B cell (primary cell): ENCODE measurements at regions of chr21 and their contacts with region 1.

Region 1: GRCh38 chr21:39183237-39184007 is at the start of gene PSMG1:
- DNase-seq: peak; percentile 97
- ATAC-seq: peak; percentile 91
- H3K4me3 ChIP-seq: peak within 1 kb of the TSS; percentile 69 to 84 (median 78)
- H3K4me3 Mint-ChIP-seq: peak within 1 kb of the TSS; percentile 100
- H3K27ac ChIP-seq: peak within 1 kb of the TSS; percentile 83 to 90
- H3K27ac Mint-ChIP-seq: peak within 1 kb of the TSS; percentile 99
- H3K4me1 ChIP-seq: peaks cover 13 to 14% of the 10 kb centered on the region in 2 donors
- H3K4me1 Mint-ChIP-seq: peaks cover 32% of the 10 kb centered on the region
- H3K27me3 ChIP-seq: no peaks in the 10 kb centered on the region
- H3K27me3 Mint-ChIP-seq: no peaks in the 10 kb centered on the region
- CTCF ChIP-seq: no peak
- total RNA-seq, gene PSMG1: 10.4 and 15.2 TPM in 2 replicates

Region 2: GRCh38 chr21:38766987-38767722 is 416.3 kb before region 1 on chr21:
- CTCF ChIA-PET with region 1: no interaction called
- POLR2A ChIA-PET with region 1: interaction called, 4 read pairs
- intact Hi-C with region 1: loop called (anchors 2 kb)
- DNase-seq: peak; percentile 75
- ATAC-seq: peak; percentile 92
- H3K4me3 ChIP-seq: peak overlapping the region; percentile 17 to 73 (median 62)
- H3K4me3 Mint-ChIP-seq: peak overlapping the region; percentile 80
- H3K27ac ChIP-seq: peak overlapping the region; percentile 46 to 60
- H3K27ac Mint-ChIP-seq: peak overlapping the region; percentile 90
- H3K4me1 ChIP-seq: peaks cover 5 to 11% of the 10 kb centered on the region in 2 donors
- H3K4me1 Mint-ChIP-seq: peaks cover 28% of the 10 kb centered on the region
- H3K27me3 ChIP-seq: peaks cover 0 to 26% (median 0%) of the 10 kb centered on the region in 4 experiments
- H3K27me3 Mint-ChIP-seq: peaks cover 29% of the 10 kb centered on the region
- CTCF ChIP-seq: no peak

Region 3: DNA sequence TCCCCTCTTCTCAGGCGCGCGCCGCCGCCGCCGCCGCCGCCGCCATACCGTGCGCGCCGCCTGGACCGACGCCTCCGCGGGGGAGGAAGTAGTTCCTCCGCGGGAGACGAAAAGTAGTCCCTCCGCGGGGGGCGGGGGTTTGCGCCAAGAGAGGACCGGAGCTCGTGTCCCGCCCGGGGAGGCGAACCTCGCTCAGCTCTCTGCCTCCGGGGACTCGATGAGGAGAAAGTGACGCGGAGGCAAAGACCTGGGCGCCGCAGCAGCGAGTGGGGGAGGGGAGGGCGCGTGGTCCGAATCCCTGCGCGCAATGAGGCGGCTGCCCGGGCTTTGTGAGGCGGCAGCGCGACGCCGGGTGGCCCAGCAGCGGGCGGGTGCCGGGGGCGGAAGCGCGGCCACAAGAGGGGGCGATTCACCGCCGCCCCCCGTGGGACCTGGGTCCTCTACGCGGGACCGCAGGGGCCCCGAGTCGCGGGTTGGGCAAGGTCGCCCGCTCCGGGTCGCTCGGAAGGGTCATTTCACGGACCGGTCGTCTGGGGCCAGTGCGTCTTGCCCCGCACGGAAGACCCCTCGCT is 130.2 kb after region 1 on chr21 and contains the start of gene BRWD1:
- CTCF ChIA-PET with region 1: interaction called, 3 read pairs
- POLR2A ChIA-PET with region 1: interaction called, 9 read pairs
- intact Hi-C with region 1: loop called (anchors 1 kb)
- DNase-seq: peak; percentile 97
- ATAC-seq: peak; percentile 52
- H3K4me3 ChIP-seq: peak within 1 kb of the TSS; percentile 50 to 83 (median 72)
- H3K4me3 Mint-ChIP-seq: peak within 1 kb of the TSS; percentile 95
- H3K27ac ChIP-seq: peak within 1 kb of the TSS; percentile 57 to 84
- H3K27ac Mint-ChIP-seq: peak within 1 kb of the TSS; percentile 90
- H3K4me1 ChIP-seq: peaks cover 11 to 29% of the 10 kb centered on the region in 2 donors
- H3K4me1 Mint-ChIP-seq: peaks cover 43% of the 10 kb centered on the region
- H3K27me3 ChIP-seq: no peaks in the 10 kb centered on the region
- H3K27me3 Mint-ChIP-seq: no peaks in the 10 kb centered on the region
- CTCF ChIP-seq: peak; percentile 55
- total RNA-seq, gene BRWD1: 90.8 and 93.9 TPM in 2 replicates

Region 4: DNA sequence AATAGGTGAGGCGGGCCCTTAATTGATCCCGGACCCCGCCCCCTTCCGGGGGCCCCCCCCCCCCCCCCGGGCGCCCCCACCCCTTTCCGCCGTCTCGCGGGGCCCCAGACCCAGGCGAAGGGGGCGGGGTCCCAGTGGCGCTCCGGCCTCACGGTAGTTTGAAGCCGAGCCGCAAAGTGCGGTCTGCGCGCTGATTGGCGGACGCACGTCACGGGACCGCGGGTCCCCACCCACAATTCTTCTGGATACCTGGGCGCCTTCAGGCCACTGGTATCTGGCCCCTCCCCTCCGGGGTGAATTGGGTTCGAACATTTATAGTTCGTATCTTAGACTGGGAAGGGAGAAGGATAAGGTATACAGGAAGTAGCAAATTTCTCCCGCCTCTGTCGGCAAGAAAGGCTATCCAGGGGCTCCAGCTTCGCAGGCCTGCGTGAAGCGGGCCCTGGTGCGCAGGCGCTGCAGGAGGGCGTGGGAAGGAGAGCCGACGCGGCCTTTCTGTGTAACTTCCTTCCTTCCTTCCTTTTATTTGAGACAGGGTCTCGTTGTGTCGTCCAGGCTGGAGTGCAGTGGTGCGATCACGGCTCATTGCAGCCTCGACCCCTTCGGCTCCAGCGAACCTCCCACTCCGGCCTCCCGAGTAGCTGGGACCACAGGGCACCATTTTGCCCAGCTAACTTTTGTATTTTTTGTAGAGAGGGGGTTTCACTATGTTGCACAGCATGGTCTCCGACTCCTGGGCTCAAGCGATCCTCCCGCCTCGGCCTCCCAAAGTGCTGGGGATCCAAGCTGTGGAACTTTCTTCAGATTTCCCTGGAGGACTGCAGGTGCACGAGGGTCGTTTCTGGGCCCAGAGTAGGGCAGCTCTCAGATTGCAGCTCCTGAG is 166.0 kb after region 1 on chr21:
- CTCF ChIA-PET with region 1: interaction called, 3 read pairs
- POLR2A ChIA-PET with region 1: interaction called, 19 read pairs
- intact Hi-C with region 1: loop called (anchors 1 kb)
- DNase-seq: peak; percentile 98
- ATAC-seq: peak; percentile 82
- H3K4me3 ChIP-seq: peak overlapping the region; percentile 42 to 89 (median 81)
- H3K4me3 Mint-ChIP-seq: peak overlapping the region; percentile 98
- H3K27ac ChIP-seq: peak overlapping the region; percentile 67 to 77
- H3K27ac Mint-ChIP-seq: peak overlapping the region; percentile 99
- H3K4me1 ChIP-seq: peaks cover 18 to 25% of the 10 kb centered on the region in 2 donors
- H3K4me1 Mint-ChIP-seq: peaks cover 31% of the 10 kb centered on the region
- H3K27me3 ChIP-seq: no peaks in the 10 kb centered on the region
- H3K27me3 Mint-ChIP-seq: peaks cover 7% of the 10 kb centered on the region
- CTCF ChIP-seq: no peak

Region 5: DNA sequence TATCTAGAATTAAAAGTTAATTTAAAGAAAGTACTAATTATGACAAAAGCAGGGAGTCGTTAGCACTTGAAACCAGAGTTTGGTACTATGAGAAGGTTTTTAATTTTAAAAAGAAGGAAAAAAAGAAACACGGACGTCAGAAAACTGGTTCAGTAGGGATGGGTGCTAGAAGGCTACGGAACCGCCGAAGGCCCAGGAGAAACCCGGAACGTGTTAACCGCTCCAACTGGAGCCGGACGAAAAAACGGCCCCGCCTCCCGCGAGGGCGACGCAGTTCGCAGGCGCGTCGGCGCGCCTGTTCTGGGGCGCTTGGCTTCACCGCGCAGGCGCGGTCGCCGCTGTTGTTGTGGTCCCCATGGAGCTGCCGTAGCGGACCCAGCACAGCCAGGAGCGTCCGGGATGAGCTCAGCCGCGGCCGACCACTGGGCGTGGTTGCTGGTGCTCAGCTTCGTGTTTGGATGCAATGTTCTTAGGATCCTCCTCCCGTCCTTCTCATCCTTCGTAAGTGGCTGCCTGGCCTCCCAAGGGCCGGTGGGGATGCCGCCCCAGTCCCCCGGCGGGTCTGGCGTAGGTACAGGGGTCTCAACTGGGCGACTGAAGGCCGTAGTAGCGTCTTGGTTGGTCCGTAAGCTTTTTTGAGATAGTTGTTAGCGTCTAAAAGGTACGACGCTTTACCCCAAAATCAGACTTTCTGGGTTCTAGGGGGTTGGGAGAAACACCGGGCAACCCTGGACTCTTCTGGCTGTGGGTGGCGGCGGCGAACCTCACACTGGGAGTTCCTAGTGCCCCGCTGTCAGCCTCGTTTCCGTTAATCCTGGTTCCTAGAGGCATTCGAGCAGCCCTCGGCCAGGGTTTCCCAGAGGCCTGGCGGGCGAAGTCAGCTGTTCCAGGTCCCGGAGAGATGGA is 196.8 kb after region 1 on chr21:
- CTCF ChIA-PET with region 1: no interaction called
- POLR2A ChIA-PET with region 1: interaction called, 4 read pairs
- intact Hi-C with region 1: loop called (anchors 2 kb)
- DNase-seq: peak; percentile 90
- ATAC-seq: peak; percentile 98
- H3K4me3 ChIP-seq: peak overlapping the region; percentile 73 to 97 (median 92)
- H3K4me3 Mint-ChIP-seq: peak overlapping the region; percentile 93
- H3K27ac ChIP-seq: peak overlapping the region; percentile 61 to 81
- H3K27ac Mint-ChIP-seq: peak overlapping the region; percentile 90
- H3K4me1 ChIP-seq: peaks cover 10 to 16% of the 10 kb centered on the region in 2 donors
- H3K4me1 Mint-ChIP-seq: peaks cover 19% of the 10 kb centered on the region
- H3K27me3 ChIP-seq: peaks cover 0 to 6% (median 0%) of the 10 kb centered on the region in 4 experiments
- H3K27me3 Mint-ChIP-seq: no peaks in the 10 kb centered on the region
- CTCF ChIP-seq: no peak

Region 6: GRCh38 chr21:39388038-39388810 is 204.8 kb after region 1 on chr21:
- CTCF ChIA-PET with region 1: interaction called, 7 read pairs
- POLR2A ChIA-PET with region 1: no interaction called
- intact Hi-C with region 1: loop called (anchors 1 kb)
- DNase-seq: peak; percentile 88
- ATAC-seq: peak; percentile 84
- H3K4me3 ChIP-seq: peak overlapping the region; percentile 38 to 63 (median 56)
- H3K4me3 Mint-ChIP-seq: peak overlapping the region; percentile 94
- H3K27ac ChIP-seq: peak overlapping the region; percentile 20 to 25
- H3K27ac Mint-ChIP-seq: peak overlapping the region; percentile 89
- H3K4me1 ChIP-seq: peaks cover 11 to 18% of the 10 kb centered on the region in 2 donors
- H3K4me1 Mint-ChIP-seq: peaks cover 24% of the 10 kb centered on the region
- H3K27me3 ChIP-seq: no peaks in the 10 kb centered on the region
- H3K27me3 Mint-ChIP-seq: no peaks in the 10 kb centered on the region
- CTCF ChIP-seq: peak; percentile 97

Region 7: GRCh38 chr21:39430457-39430856 is 247.0 kb after region 1 on chr21:
- CTCF ChIA-PET with region 1: no interaction called
- POLR2A ChIA-PET with region 1: no interaction called
- intact Hi-C with region 1: no loop called
- DNase-seq: no peak
- ATAC-seq: no peak
- H3K4me3 ChIP-seq: no peak overlapping the region
- H3K4me3 Mint-ChIP-seq: no peak overlapping the region
- H3K27ac ChIP-seq: no peak overlapping the region
- H3K27ac Mint-ChIP-seq: no peak overlapping the region
- H3K4me1 ChIP-seq: no peaks in the 10 kb centered on the region
- H3K4me1 Mint-ChIP-seq: peaks cover 5% of the 10 kb centered on the region
- H3K27me3 ChIP-seq: no peaks in the 10 kb centered on the region
- H3K27me3 Mint-ChIP-seq: peaks cover 4% of the 10 kb centered on the region
- CTCF ChIP-seq: no peak

Region 8: DNA sequence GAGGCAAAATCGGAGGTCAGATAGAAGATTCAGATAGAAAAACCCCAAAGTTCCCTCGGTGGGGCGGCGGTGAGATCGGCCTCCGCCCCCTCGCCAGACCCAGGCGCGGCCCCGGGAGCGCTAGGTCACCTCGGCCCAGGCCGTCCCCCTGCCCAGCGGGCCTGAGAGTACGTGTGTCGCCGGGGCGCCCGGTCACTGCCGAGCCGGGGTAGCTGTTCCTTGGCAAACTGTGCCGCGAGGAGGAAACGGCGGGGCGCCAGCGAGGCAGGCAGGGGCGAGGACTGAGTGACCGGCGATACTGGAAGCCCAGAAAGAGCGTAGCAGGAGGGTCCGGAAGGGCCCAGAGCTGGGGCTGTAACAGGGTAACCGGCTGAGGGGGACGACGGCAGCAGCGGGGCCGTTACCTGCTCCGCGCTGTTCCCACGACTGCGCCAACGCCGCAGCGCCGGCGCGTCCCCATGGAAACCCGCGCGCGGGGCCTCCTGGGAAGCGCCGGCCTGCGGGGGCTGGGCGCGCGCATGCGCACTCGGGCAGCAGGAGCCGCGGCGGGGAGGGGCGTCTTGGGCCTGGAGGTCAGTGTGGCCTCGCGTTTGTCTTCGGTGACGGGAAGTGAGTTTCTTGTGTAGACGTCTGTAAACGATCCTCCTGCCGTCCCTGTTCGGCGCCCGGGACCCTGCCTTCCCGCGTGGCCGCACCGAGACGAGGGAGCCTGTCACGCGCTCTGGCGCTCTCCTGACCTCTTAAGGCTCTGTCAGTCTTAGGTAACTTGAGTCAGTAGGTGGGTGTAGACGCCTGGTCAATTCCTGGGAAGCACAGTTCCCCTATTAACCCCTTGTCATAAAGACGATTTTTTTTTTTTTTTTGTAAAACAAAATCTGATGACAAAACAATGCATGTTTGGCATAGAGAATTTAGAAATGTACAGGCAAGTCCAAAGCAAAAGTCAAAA is 262.2 kb after region 1 on chr21 and contains the start of gene LCA5L:
- CTCF ChIA-PET with region 1: no interaction called
- POLR2A ChIA-PET with region 1: no interaction called
- intact Hi-C with region 1: loop called (anchors 1 kb)
- DNase-seq: peak; percentile 95
- ATAC-seq: peak; percentile 88
- H3K4me3 ChIP-seq: peak within 1 kb of the TSS; percentile 16 to 84 (median 81)
- H3K4me3 Mint-ChIP-seq: peak within 1 kb of the TSS; percentile 97
- H3K27ac ChIP-seq: peak within 1 kb of the TSS; percentile 76 to 88
- H3K27ac Mint-ChIP-seq: peak within 1 kb of the TSS; percentile 99
- H3K4me1 ChIP-seq: peaks cover 6 to 13% of the 10 kb centered on the region in 2 donors
- H3K4me1 Mint-ChIP-seq: peaks cover 12% of the 10 kb centered on the region
- H3K27me3 ChIP-seq: peaks cover 0 to 3% (median 0%) of the 10 kb centered on the region in 4 experiments
- H3K27me3 Mint-ChIP-seq: peaks cover 23% of the 10 kb centered on the region
- CTCF ChIP-seq: peak; percentile 26
- total RNA-seq, gene LCA5L: 0.39 and 0.62 TPM in 2 replicates